Naive thymus-derived CD4-positive, alpha-beta T cell (primary cell): ENCODE measurements at regions of chr11 and their contacts with region 1.

Region 1: DNA sequence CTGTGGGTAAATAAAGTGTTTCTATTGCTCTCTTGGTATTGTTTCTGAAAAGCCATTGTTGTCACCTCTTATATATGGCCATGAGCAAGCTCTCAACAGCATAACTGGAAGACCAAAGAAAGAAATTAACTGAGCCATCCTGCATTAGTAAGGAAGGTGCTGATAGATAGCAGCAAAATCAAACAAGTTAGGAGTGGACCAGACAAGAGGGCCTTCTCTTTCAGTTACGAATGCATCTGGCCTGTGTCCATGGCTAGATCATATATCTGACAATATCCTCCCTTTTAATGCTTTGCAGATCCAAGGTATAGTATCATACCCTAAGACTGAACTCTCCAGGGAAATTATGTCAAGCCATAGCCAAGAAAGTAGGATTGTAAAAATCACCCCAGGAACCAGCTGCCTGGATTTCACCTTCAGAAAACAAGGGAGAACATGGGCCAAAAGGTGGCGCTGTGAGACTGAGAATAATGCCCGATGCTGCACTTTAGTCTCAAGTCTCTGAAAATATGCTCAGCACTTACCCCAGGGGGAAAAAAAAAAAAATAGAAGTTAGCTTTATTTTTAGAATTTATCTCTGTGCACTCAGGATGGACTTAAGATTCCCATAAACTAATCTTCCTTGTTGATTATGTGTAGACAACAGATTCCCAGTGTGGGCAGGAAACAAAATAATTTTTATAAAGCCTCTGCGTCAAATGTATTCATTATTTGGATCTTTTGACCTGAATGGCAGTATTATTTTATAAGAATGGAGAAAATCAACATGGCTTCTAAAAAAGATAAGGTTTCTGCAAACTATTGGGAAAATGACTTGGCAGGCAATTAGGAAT is 415.1 kb downstream of the ETS1 start:
- DNase-seq: peak; percentile 59 to 82 (median 75)
- ATAC-seq: peak; percentile 85
- H3K4me3 ChIP-seq: no peak overlapping the region
- H3K4me3 Mint-ChIP-seq: no peak overlapping the region
- H3K27ac ChIP-seq: no peak overlapping the region
- H3K27ac Mint-ChIP-seq: peak overlapping the region in 2 of 9 donors; percentile 27 to 70
- H3K4me1 ChIP-seq: no peaks in the 10 kb centered on the region
- H3K4me1 Mint-ChIP-seq: peaks cover 0 to 9% (median 4%) of the 10 kb centered on the region in 7 donors
- H3K27me3 ChIP-seq: no peaks in the 10 kb centered on the region
- H3K27me3 Mint-ChIP-seq: peaks cover 0 to 15% (median 0%) of the 10 kb centered on the region in 5 donors

Region 2: GRCh38 chr11:128026596-128026995 is 145.7 kb before region 1 on chr11:
- CTCF ChIA-PET with region 1: interaction called, 4 read pairs
- POLR2A ChIA-PET with region 1: no interaction called
- intact Hi-C with region 1: loop called (anchors 1 kb)
- DNase-seq: no peak
- ATAC-seq: peak; percentile 34
- H3K4me3 ChIP-seq: no peak overlapping the region
- H3K4me3 Mint-ChIP-seq: no peak overlapping the region
- H3K27ac ChIP-seq: no peak overlapping the region
- H3K27ac Mint-ChIP-seq: peak overlapping the region in 1 of 9 donors; percentile 12
- H3K4me1 ChIP-seq: peaks cover 0 to under 1% of the 10 kb centered on the region in 2 donors
- H3K4me1 Mint-ChIP-seq: peaks cover 0 to 5% (median 3%) of the 10 kb centered on the region in 7 donors
- H3K27me3 ChIP-seq: no peaks in the 10 kb centered on the region
- H3K27me3 Mint-ChIP-seq: peaks cover 0 to 37% (median 2%) of the 10 kb centered on the region in 5 donors

Region 3: GRCh38 chr11:128471138-128471661 is 298.9 kb after region 1 on chr11:
- CTCF ChIA-PET with region 1: no interaction called
- POLR2A ChIA-PET with region 1: no interaction called
- intact Hi-C with region 1: no loop called
- DNase-seq: peak in 6 of 9 donors; percentile 66 to 75 (median 68)
- ATAC-seq: peak; percentile 56
- H3K4me3 ChIP-seq: peak overlapping the region; percentile 63
- H3K4me3 Mint-ChIP-seq: peak overlapping the region; percentile 73 to 99 (median 84)
- H3K27ac ChIP-seq: peak overlapping the region; percentile 97
- H3K27ac Mint-ChIP-seq: peak overlapping the region; percentile 92 to 100 (median 98)
- H3K4me1 ChIP-seq: peaks cover 99 to 100% of the 10 kb centered on the region in 2 donors
- H3K4me1 Mint-ChIP-seq: peaks cover 76 to 100% (median 98%) of the 10 kb centered on the region in 7 donors
- H3K27me3 ChIP-seq: no peaks in the 10 kb centered on the region
- H3K27me3 Mint-ChIP-seq: no peaks in the 10 kb centered on the region

Region 4: DNA sequence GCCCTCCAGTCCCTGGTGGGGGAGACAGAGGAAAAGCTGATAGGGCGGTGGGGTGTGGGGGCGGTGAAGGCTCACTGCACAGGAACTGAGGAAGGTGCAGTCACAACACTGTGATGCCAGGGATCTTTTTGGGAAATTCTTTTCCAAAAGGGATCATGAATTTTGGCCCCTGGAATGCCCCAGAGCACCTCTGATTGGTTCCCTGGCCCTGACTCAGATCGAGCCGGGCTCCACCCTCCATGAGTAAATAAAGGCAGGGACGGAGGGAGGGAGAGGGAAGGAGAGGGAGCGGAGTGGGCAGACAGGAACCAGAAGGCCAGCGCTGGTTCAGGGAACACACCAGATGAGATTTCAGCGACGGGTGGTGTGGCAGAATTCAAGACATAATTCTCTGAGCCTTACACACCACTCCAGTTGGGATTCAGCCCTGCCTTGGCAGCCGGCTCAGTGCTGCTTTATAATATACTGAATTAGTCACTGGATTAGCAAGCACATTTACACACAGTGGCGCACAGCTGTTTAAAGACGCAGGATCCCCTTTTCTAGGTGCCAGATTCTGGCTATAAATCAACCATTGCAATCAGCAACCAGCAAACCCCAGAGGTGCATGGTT is 334.8 kb after region 1 on chr11:
- CTCF ChIA-PET with region 1: interaction called, 6 read pairs
- POLR2A ChIA-PET with region 1: no interaction called
- intact Hi-C with region 1: loop called in 1 of 2 experiments (anchors 5 kb)
- DNase-seq: peak in 1 of 9 donors; percentile 60
- ATAC-seq: no peak
- H3K4me3 ChIP-seq: peak overlapping the region; percentile 96
- H3K4me3 Mint-ChIP-seq: peak overlapping the region; percentile 85 to 100 (median 98)
- H3K27ac ChIP-seq: peak overlapping the region; percentile 97
- H3K27ac Mint-ChIP-seq: peak overlapping the region; percentile 87 to 99 (median 97)
- H3K4me1 ChIP-seq: peaks cover 89 to 91% of the 10 kb centered on the region in 2 donors
- H3K4me1 Mint-ChIP-seq: peaks cover 70 to 98% (median 92%) of the 10 kb centered on the region in 7 donors
- H3K27me3 ChIP-seq: no peaks in the 10 kb centered on the region
- H3K27me3 Mint-ChIP-seq: no peaks in the 10 kb centered on the region

Region 5: GRCh38 chr11:128776424-128777284 is 604.4 kb after region 1 on chr11:
- CTCF ChIA-PET with region 1: interaction called, 7 read pairs
- POLR2A ChIA-PET with region 1: interaction called, 3 read pairs
- intact Hi-C with region 1: loop called (anchors 1 kb)
- DNase-seq: peak in 7 of 9 donors; percentile 12 to 44 (median 38)
- ATAC-seq: peak; percentile 80
- H3K4me3 ChIP-seq: no peak overlapping the region
- H3K4me3 Mint-ChIP-seq: no peak overlapping the region
- H3K27ac ChIP-seq: no peak overlapping the region
- H3K27ac Mint-ChIP-seq: peak overlapping the region in 6 of 9 donors; percentile 34 to 65 (median 58)
- H3K4me1 ChIP-seq: peaks cover 21 to 34% of the 10 kb centered on the region in 2 donors
- H3K4me1 Mint-ChIP-seq: peaks cover 46 to 89% (median 66%) of the 10 kb centered on the region in 7 donors
- H3K27me3 ChIP-seq: no peaks in the 10 kb centered on the region
- H3K27me3 Mint-ChIP-seq: no peaks in the 10 kb centered on the region

Region 6: DNA sequence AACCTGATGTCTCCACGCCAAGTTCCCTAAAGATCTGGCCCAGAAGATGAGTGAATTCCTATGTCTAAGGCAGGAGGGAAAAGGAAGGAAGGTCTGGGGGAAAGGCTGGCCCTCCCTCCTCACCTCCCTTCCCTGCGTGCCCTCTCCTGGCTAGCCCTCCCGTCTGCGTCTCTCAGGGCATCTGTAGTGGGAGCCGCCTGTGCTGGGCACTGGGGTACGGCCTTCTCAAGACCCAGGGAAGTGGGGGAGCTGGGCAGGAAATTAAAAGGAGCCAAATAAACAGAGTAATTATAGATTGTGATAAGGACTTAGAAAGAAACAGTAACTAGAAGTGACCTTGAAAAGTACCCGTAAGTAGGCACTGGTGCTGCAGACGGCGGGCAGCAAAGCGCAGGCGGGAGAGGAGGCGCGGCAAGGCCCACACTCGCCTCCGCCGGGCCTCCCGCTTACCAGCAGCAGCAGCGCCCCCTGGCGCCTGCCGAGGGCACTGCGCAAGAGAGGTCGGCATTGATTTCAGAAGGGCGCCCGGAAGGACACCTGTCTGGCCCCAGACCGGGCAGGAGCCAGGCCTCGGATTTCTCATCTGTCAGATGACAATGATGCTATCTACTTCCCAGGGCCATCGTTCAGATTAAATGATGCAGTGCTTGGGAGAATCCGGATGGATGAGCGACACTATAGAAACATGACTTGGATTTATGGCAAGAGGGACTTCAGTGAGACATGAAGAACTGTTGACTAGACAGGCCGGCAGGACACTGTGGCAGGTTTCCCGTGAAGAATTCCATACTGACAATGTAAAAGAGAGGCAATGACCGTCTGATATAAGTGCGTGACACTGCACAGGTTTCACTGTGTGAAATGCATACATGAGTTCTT is 687.5 kb after region 1 on chr11:
- CTCF ChIA-PET with region 1: interaction called, 31 read pairs
- POLR2A ChIA-PET with region 1: interaction called, 3 read pairs
- intact Hi-C with region 1: loop called (anchors 1 kb)
- DNase-seq: peak; percentile 55 to 83 (median 66)
- ATAC-seq: peak; percentile 95
- H3K4me3 ChIP-seq: no peak overlapping the region
- H3K4me3 Mint-ChIP-seq: peak overlapping the region in 3 of 10 donors; percentile 12 to 26 (median 18)
- H3K27ac ChIP-seq: no peak overlapping the region
- H3K27ac Mint-ChIP-seq: no peak overlapping the region
- H3K4me1 ChIP-seq: peaks cover 0 to 4% of the 10 kb centered on the region in 2 donors
- H3K4me1 Mint-ChIP-seq: peaks cover 0 to 9% (median 5%) of the 10 kb centered on the region in 7 donors
- H3K27me3 ChIP-seq: no peaks in the 10 kb centered on the region
- H3K27me3 Mint-ChIP-seq: peaks cover 0 to 16% (median 0%) of the 10 kb centered on the region in 5 donors

Region 7: DNA sequence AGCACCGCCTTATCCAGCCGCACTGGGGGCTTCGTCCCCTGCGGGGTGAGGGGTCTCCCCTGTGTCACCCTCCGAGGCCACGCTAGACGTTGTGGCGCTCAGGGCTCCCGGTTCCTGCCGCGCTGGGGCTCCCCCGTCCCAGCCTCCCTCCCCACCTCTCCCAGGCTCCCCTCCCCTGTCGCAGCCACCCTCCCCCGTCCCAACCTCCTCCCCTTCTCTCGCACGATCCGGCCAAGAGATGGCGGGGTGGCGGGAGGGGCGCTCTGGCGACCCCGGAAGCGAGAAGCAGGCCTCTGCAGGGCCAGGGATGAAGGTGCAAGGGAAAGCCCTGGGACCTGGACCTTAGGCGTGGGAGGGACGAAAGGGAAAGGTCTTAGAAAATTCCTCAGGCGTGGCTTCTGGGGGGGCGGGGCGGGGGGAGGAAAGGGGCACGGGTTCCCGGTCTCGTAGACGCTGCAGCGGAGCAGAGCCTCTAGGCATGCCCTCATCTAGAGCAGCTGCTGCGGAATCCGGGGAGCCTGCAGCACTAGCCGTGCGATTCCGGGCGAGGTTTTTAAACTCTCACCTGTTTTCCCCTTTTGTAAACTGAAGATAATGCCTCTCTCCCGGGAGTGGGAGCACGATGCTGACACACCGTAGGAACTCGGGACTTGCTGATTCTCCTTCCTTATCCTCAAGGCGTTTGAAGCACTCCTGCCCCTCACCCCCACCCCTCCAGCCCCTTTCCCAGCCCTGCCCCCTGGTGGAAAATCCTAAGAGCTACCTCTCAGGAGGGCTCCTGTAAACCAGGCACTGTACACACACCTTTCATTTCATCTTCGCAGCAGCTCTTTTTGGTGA is 733.3 kb after region 1 on chr11:
- CTCF ChIA-PET with region 1: no interaction called
- POLR2A ChIA-PET with region 1: no interaction called
- intact Hi-C with region 1: loop called in 1 of 2 experiments (anchors 5 kb)
- DNase-seq: peak in 7 of 9 donors; percentile 27 to 51 (median 46)
- ATAC-seq: peak; percentile 73
- H3K4me3 ChIP-seq: peak overlapping the region; percentile 62
- H3K4me3 Mint-ChIP-seq: peak overlapping the region; percentile 79 to 89 (median 82)
- H3K27ac ChIP-seq: no peak overlapping the region
- H3K27ac Mint-ChIP-seq: peak overlapping the region in 2 of 9 donors; percentile 13 to 59
- H3K4me1 ChIP-seq: peaks cover 0 to 3% of the 10 kb centered on the region in 2 donors
- H3K4me1 Mint-ChIP-seq: peaks cover 7 to 24% (median 11%) of the 10 kb centered on the region in 7 donors
- H3K27me3 ChIP-seq: peaks cover 4 to 5% of the 10 kb centered on the region in 2 donors
- H3K27me3 Mint-ChIP-seq: peaks cover 8 to 88% (median 29%) of the 10 kb centered on the region in 5 donors

Region 8: DNA sequence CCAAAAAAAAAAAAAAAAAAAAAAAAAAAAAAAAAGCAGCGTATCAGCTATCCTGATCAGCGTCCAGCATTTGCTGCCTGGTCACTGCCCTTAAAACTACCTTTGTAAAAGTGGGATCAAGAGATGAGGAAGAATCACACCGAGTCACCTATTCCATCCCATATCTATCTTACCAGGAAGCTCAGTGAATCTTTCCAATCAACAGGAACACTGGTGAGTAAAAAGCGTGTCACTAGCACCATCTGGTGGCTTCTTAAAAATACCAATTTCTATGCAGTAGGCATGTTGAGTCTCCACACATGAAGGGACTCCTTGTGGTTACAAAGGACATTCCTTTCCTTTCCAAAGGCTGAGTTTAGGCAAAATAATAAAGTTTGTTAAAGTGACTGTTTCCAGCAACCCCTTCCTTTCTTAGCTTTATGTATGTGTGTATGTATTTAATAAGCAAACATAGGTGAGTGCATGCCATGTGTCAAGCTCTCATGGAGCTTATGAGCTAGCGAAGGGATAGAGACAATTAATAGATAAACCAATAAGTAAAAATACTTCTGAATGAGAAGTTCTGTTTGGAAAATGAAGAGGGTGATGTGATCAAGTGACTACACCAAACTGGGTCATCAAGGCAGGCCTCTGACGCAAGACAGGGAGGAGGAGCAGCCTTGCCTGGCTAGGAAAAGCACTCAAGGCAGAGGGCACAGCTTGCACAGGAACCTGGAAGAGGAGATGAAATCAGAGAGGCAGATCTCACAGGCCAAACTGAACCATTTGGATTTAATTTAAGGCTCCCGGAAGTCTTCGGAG is 784.3 kb after region 1 on chr11:
- CTCF ChIA-PET with region 1: no interaction called
- POLR2A ChIA-PET with region 1: no interaction called
- intact Hi-C with region 1: loop called (anchors 1 to 5 kb)
- DNase-seq: peak in 6 of 9 donors; percentile 10 to 48 (median 34)
- ATAC-seq: peak; percentile 60
- H3K4me3 ChIP-seq: no peak overlapping the region
- H3K4me3 Mint-ChIP-seq: peak overlapping the region in 4 of 10 donors; percentile 15 to 52 (median 30)
- H3K27ac ChIP-seq: no peak overlapping the region
- H3K27ac Mint-ChIP-seq: no peak overlapping the region
- H3K4me1 ChIP-seq: no peaks in the 10 kb centered on the region
- H3K4me1 Mint-ChIP-seq: peaks cover 2 to 6% (median 4%) of the 10 kb centered on the region in 7 donors
- H3K27me3 ChIP-seq: no peaks in the 10 kb centered on the region
- H3K27me3 Mint-ChIP-seq: peaks cover 0 to 33% (median 8%) of the 10 kb centered on the region in 5 donors